Activated naive CD4-positive, alpha-beta T cell treated with anti-CD3 and anti-CD28 coated beads, Interleukin-2, amount 10 ng/mL, durations not matched to agents 7 days and 5 days (primary cell): ENCODE measurements at regions of chr14 and their contacts with region 1.

Region 1: GRCh38 chr14:68911594-68912227 is 67.4 kb downstream of the ACTN1 start:
- DNase-seq: peak; percentile 84
- H3K4me3 Mint-ChIP-seq: no peak overlapping the region
- H3K27ac Mint-ChIP-seq: no peak overlapping the region
- H3K4me1 Mint-ChIP-seq: peaks cover 9% of the 10 kb centered on the region
- H3K27me3 Mint-ChIP-seq: no peaks in the 10 kb centered on the region

Region 2: GRCh38 chr14:68926236-68926635 is 14.5 kb after region 1 on chr14:
- CTCF ChIA-PET with region 1: interaction called, 65 read pairs
- DNase-seq: peak; percentile 43
- H3K4me3 Mint-ChIP-seq: no peak overlapping the region
- H3K27ac Mint-ChIP-seq: no peak overlapping the region
- H3K4me1 Mint-ChIP-seq: peaks cover 49% of the 10 kb centered on the region
- H3K27me3 Mint-ChIP-seq: no peaks in the 10 kb centered on the region

Region 3: GRCh38 chr14:69002069-69002468 is 90.4 kb after region 1 on chr14:
- CTCF ChIA-PET with region 1: interaction called, 23 read pairs
- DNase-seq: no peak
- H3K4me3 Mint-ChIP-seq: no peak overlapping the region
- H3K27ac Mint-ChIP-seq: no peak overlapping the region
- H3K4me1 Mint-ChIP-seq: peaks cover 12% of the 10 kb centered on the region
- H3K27me3 Mint-ChIP-seq: peaks cover 14% of the 10 kb centered on the region

Region 4: DNA sequence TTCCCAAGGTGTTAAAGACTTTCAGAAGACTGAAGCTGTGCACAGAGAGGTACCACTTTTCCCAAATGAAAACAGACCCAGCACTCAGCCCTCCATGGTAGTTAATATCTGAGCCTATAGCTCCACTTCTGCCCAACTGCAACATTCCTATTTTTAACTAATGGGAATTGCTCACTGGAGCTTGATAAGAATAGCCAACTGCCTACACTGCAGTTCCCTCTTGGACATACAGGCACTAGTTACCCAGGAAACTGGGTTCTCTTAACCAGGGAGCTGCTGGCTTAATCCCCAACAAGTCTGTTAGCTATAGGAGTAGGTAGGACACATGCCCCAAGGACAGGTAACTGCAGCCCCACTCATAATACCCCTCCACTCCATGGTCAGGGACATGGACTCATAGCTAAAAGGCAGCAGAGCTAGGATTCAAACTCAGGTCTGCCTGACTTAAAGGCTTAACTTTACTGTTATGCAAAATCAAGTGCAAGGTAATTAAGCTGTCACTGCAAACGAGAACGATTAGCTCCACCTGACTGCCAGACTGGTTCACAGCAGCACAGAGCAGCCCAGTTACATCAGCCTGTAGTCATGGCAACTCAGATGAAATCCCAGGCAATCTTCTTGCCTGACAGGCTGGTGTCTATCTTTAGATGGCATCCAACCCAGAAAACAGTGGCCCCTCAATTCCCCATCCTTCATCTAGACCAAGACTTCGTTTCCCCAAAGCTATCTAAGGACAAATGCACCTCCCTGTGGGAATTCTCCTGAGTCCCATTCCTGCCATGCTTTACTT is 144.5 kb after region 1 on chr14:
- CTCF ChIA-PET with region 1: interaction called, 10 read pairs
- DNase-seq: no peak
- H3K4me3 Mint-ChIP-seq: no peak overlapping the region
- H3K27ac Mint-ChIP-seq: no peak overlapping the region
- H3K4me1 Mint-ChIP-seq: peaks cover 19% of the 10 kb centered on the region
- H3K27me3 Mint-ChIP-seq: no peaks in the 10 kb centered on the region

Region 5: DNA sequence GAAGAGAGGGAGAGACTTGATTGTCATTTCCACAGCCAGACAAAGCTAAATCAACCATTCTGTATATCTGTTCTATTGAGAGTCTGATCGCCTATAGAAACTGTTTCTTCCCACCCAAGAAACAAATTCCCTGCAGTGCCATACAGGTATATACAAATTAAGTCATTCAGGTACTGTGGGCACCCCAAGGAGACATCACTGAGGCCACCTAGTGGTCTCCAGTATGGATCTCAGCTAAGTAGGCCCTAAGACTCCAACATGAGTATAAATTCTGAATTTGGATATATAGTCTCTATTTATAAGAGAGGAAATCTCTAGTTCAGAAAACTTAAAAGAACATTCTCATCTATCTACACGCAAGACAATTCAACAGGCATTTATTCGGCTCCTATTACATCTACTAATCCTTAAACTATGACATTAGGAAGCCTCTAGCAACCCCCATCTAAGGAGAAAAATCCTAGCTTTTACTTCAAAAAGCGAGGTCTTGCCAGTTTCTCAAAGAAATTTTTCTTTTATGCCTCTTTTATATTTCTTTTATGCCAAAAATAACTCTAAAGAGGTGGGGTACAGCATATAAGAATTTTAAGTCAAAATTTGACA is 178.6 kb after region 1 on chr14:
- CTCF ChIA-PET with region 1: interaction called, 59 read pairs
- DNase-seq: peak; percentile 56
- H3K4me3 Mint-ChIP-seq: no peak overlapping the region
- H3K27ac Mint-ChIP-seq: no peak overlapping the region
- H3K4me1 Mint-ChIP-seq: peaks cover 12% of the 10 kb centered on the region
- H3K27me3 Mint-ChIP-seq: no peaks in the 10 kb centered on the region

Region 6: GRCh38 chr14:69101331-69101826 is 189.7 kb after region 1 on chr14:
- CTCF ChIA-PET with region 1: interaction called, 47 read pairs
- DNase-seq: no peak
- H3K4me3 Mint-ChIP-seq: no peak overlapping the region
- H3K27ac Mint-ChIP-seq: peak overlapping the region; percentile 33
- H3K4me1 Mint-ChIP-seq: peaks cover 10% of the 10 kb centered on the region
- H3K27me3 Mint-ChIP-seq: no peaks in the 10 kb centered on the region

Region 7: DNA sequence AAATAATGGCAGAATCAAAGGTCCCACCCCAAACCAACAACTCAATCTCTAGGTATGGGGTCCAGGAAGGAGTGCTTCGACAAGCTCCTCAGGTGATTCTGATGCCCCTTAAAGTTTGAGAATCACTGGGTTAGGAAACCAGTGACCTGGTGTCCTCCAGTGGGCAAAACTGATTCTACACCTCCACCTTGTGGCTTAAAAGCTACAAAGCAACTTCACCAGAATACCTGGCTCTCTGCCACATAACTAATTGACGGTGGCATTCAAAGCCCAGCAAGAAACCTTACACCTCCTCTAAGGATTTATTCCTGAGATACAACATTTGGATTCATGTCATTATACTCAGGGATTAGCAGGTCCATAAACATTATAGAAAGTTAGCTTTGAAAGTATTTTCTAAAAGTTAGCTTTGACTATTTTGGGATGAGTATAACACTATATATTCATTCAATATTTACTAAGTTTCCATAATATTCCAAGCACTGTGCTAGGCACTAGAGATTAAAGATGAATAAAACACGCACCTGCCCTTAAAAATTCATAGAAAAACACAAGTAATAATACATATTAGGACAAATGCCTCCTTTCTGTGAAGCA is 195.8 kb after region 1 on chr14:
- CTCF ChIA-PET with region 1: interaction called, 47 read pairs
- DNase-seq: peak; percentile 36
- H3K4me3 Mint-ChIP-seq: no peak overlapping the region
- H3K27ac Mint-ChIP-seq: no peak overlapping the region
- H3K4me1 Mint-ChIP-seq: no peaks in the 10 kb centered on the region
- H3K27me3 Mint-ChIP-seq: no peaks in the 10 kb centered on the region